ENCODE measurements at regions of chr5 and their contacts with region 1.

Region 1: GRCh38 chr5:177478711-177479646 is 5.5 kb upstream of the DBN1 start:
- DNase-seq: peak in 4 of 10 donors; percentile 34 to 60 (median 51)
- ATAC-seq: peak; percentile 84 to 89
- H3K4me3 Mint-ChIP-seq: peak overlapping the region in 8 of 10 donors; percentile 28 to 80 (median 60)
- H3K27ac Mint-ChIP-seq: peak overlapping the region; percentile 77 to 97 (median 94)
- H3K4me1 Mint-ChIP-seq: peaks cover 30 to 54% (median 50%) of the 10 kb centered on the region in 4 donors
- H3K27me3 Mint-ChIP-seq: no peaks in the 10 kb centered on the region

Region 2: DNA sequence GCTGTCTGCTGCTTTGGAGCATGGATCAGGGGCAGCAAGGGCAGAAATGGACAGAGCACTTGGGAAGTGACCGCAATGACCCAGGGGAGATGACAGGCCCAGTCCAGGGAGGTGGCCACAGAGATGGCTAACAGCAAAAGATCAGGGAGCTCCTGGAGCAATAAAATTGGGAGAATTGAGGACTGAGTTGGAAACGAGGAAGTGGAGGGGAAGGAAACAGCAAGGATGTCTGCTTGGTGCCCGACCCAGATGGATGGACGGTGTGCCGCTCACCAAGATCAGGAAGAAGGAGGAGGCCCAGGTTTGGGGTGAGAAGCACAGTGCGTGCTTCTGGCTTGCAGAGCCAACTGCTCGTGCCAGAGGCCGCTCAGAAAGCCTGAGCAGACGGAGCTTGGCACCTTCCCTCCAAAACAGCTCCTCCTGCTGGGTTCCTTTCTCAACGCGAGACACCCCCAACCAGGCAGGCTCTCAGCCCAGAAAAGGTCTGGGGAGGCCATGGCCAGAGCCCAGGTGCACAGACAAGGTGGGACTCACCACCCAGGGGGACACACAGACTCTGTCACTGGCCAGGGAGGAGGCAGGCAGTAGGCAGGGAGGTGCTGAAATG is 96.5 kb before region 1 on chr5:
- POLR2A ChIA-PET with region 1: interaction called, 10 read pairs
- DNase-seq: peak in 7 of 10 donors; percentile 27 to 73 (median 38)
- ATAC-seq: peak; percentile 76 to 97
- H3K4me3 Mint-ChIP-seq: peak overlapping the region in 4 of 10 donors; percentile 27 to 47 (median 32)
- H3K27ac Mint-ChIP-seq: peak overlapping the region in 9 of 10 donors; percentile 35 to 84 (median 73)
- H3K4me1 Mint-ChIP-seq: peaks cover 20 to 53% (median 37%) of the 10 kb centered on the region in 4 donors
- H3K27me3 Mint-ChIP-seq: no peaks in the 10 kb centered on the region

Region 3: DNA sequence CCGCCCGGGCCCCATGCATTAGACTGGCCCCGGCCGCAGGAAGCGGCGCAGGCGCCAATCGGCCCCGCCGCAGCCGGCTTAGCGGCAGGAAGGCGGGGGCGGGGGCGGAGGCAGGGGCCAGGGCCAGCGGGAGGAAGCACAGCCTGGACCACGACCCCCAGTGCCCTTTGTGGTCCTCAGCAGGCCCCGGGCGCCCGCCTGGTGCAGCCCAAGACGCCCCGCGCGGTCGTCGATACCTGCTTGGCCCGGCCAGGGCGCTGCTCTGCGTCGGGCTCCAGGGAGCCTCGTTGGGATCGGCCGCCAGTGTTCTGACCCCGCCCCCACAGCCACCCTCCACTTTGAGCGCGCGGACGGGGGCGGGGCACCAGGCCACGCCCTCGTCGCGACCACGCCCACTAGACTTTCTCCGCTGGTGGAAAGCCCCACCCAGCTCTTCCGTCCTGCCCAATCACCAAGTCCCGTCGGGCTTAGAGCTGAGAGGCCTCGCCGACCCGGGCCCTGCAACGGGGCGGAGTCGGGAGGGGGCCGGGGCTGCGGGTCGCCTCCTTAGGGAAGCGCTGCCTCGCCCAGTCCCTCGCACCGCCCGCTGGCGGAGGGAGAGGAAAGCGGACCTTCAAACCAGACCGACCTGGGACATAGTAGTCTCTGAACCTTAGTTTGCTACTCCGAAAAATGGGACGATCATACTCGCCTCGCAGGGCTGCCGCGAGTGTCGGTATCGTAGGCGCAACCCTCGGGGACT is 18.5 kb after region 1 on chr5 and contains the start of gene PDLIM7:
- POLR2A ChIA-PET with region 1: interaction called, 36 read pairs
- DNase-seq: peak; percentile 84 to 94 (median 92)
- ATAC-seq: peak; percentile 86 to 89
- H3K4me3 Mint-ChIP-seq: peak within 1 kb of the TSS; percentile 70 to 90 (median 84)
- H3K27ac Mint-ChIP-seq: peak within 1 kb of the TSS in 9 of 10 donors; percentile 20 to 90 (median 69)
- H3K4me1 Mint-ChIP-seq: peaks cover 18 to 55% (median 41%) of the 10 kb centered on the region in 4 donors
- H3K27me3 Mint-ChIP-seq: peaks cover 0 to 2% (median 0%) of the 10 kb centered on the region in 5 donors
- polyA plus RNA-seq, gene PDLIM7: 4.3 to 5.8 (median 5.3) TPM

Region 4: DNA sequence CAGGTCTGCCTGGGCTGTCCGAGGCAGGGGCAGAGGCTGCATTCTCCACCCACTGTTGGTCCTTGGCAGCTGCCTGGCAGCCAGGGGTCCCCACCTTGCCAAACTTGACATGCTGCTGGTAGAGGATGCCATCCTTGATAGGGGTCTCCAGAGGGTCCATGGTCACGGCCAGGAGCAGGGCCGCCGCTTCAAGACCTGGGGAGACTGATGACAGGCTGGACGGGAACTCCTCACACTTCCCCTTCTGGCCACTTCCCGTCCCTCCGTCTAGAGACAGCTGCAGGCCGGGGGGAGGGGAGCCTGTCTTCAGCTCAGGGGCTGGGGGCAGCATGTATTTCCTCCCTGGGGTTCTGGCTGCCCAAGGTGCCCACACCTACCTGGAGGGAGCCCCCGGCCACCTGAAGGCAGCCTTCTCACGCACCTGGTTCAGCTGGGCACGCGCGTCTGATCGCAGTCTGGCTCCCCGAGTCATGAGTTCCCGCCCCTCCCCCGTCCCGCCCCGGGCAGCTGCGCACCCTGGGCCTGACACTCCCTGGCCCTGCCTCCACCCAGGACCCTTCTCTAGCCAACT is 30.5 kb after region 1 on chr5 and contains the start of gene DOK3:
- POLR2A ChIA-PET with region 1: no interaction called
- DNase-seq: no peak
- ATAC-seq: no peak
- H3K4me3 Mint-ChIP-seq: peak within 1 kb of the TSS in 4 of 10 donors; percentile 33 to 86 (median 40)
- H3K27ac Mint-ChIP-seq: peak within 1 kb of the TSS in 4 of 10 donors; percentile 24 to 65 (median 61)
- H3K4me1 Mint-ChIP-seq: peaks cover 12 to 37% (median 19%) of the 10 kb centered on the region in 4 donors
- H3K27me3 Mint-ChIP-seq: no peaks in the 10 kb centered on the region
- polyA plus RNA-seq, gene DOK3: 0.22 TPM in 1 of 3 donors, not detected in the others

Region 5: GRCh38 chr5:177529247-177530203 is 50.5 kb after region 1 on chr5:
- POLR2A ChIA-PET with region 1: no interaction called
- DNase-seq: no peak
- ATAC-seq: no peak
- H3K4me3 Mint-ChIP-seq: no peak overlapping the region
- H3K27ac Mint-ChIP-seq: peak overlapping the region in 2 of 10 donors; percentile 38 to 89
- H3K4me1 Mint-ChIP-seq: peaks cover 0 to 11% (median 1%) of the 10 kb centered on the region in 4 donors
- H3K27me3 Mint-ChIP-seq: no peaks in the 10 kb centered on the region

Measured in naive thymus-derived CD8-positive, alpha-beta T cell (primary cell).